ENCODE measurements at regions of chr10 and their contacts with region 1.

Region 1: GRCh38 chr10:74753442-74754211 is 72.8 kb upstream of the KAT6B start:
- DNase-seq: peak; percentile 100
- ATAC-seq: peak; percentile 86
- H3K4me3 ChIP-seq: peak overlapping the region; percentile 30
- H3K27ac ChIP-seq: peak overlapping the region; percentile 82
- H3K4me1 ChIP-seq: peaks cover 25% of the 10 kb centered on the region
- H3K27me3 ChIP-seq: no peaks in the 10 kb centered on the region
- CTCF ChIP-seq: peak; percentile 51

Region 2: GRCh38 chr10:74548676-74549075 is 205.0 kb before region 1 on chr10:
- CTCF ChIA-PET with region 1: no interaction called
- POLR2A ChIA-PET with region 1: no interaction called
- intact Hi-C with region 1: loop called (anchors 1 kb)
- DNase-seq: peak; percentile 100
- ATAC-seq: peak; percentile 97
- H3K4me3 ChIP-seq: peak overlapping the region; percentile 4; the same call in 1 of the 2 replicates
- H3K27ac ChIP-seq: peak overlapping the region; percentile 66
- H3K4me1 ChIP-seq: peaks cover 21% of the 10 kb centered on the region
- H3K27me3 ChIP-seq: no peaks in the 10 kb centered on the region
- CTCF ChIP-seq: no peak

Region 3: GRCh38 chr10:74704629-74705357 is 48.8 kb before region 1 on chr10:
- CTCF ChIA-PET with region 1: no interaction called
- POLR2A ChIA-PET with region 1: no interaction called
- intact Hi-C with region 1: loop called (anchors 1 kb)
- DNase-seq: peak; percentile 95
- ATAC-seq: peak; percentile 95
- H3K4me3 ChIP-seq: no peak overlapping the region
- H3K27ac ChIP-seq: peak overlapping the region; percentile 28
- H3K4me1 ChIP-seq: peaks cover 15% of the 10 kb centered on the region
- H3K27me3 ChIP-seq: no peaks in the 10 kb centered on the region
- CTCF ChIP-seq: no peak

Region 4: DNA sequence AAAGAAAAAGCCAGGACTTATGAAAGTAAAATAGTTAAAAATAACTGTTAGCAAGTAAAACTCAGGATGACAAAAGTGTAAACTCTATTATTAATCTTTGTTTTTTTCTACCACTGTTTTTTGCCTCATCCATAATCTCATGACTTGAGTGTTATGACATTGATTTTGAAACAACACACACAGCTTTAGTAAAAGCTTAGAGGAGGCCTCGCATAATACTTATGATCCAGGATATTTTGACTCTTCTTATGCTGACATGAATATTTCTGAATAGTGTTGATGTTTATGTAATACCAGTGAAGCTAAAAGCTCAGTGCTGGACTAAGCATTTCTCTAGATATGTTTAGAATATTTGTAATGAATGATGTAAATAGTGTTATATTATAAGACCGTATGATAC is 83.2 kb after region 1 on chr10:
- CTCF ChIA-PET with region 1: no interaction called
- POLR2A ChIA-PET with region 1: no interaction called
- intact Hi-C with region 1: no loop called
- DNase-seq: no peak
- ATAC-seq: no peak
- H3K4me3 ChIP-seq: no peak overlapping the region
- H3K27ac ChIP-seq: no peak overlapping the region
- H3K4me1 ChIP-seq: peaks cover 29% of the 10 kb centered on the region
- H3K27me3 ChIP-seq: no peaks in the 10 kb centered on the region
- CTCF ChIP-seq: no peak

Region 5: GRCh38 chr10:74875952-74876351 is 122.3 kb after region 1 on chr10:
- CTCF ChIA-PET with region 1: no interaction called
- POLR2A ChIA-PET with region 1: no interaction called
- intact Hi-C with region 1: loop called (anchors 1 kb)
- DNase-seq: peak; percentile 99
- ATAC-seq: peak; percentile 92
- H3K4me3 ChIP-seq: peak overlapping the region; percentile 1; the same call in 1 of the 2 replicates
- H3K27ac ChIP-seq: peak overlapping the region; percentile 67
- H3K4me1 ChIP-seq: peaks cover 56% of the 10 kb centered on the region
- H3K27me3 ChIP-seq: no peaks in the 10 kb centered on the region
- CTCF ChIP-seq: no peak

Region 6: DNA sequence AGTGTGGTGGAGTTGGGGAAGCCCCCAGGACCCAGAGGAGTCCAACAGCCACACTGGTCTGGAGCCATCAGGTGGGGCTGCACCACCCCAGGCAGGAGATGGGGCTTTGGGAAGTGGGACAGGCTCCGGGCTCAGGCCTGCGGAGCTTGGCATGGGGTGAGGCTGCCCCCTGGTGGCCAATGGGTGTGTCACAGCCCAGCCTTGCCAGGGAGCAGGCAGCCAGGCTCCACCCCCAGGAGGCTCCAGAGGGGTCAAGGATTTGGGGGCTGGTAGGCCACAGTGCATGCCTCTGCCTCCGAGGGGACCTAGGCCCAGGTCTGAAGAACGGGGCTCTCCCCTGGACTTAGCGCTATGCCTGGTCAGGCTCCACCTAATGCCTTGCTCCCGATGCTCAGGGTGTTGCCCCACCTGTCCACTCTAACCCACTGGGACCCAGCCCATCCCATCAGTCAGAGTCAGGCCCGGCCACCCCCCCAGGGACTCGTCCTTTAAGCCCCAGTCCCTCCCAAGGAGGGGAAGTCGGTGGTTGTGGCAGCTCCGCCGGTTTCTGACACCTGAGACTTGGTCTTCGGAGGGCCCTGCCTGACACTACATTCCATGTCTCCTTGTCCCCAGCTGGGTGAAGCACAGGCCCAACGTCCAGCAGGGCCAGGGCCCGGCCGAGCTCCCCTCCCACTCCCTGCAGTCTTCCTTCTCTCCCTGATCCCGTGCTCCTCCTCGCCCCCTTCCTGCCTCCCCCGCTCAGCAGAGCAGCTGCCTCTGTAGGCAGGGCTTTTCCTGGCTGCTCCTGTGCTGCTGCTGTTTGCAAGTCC is 346.5 kb after region 1 on chr10:
- CTCF ChIA-PET with region 1: no interaction called
- POLR2A ChIA-PET with region 1: no interaction called
- intact Hi-C with region 1: loop called (anchors 5 kb)
- DNase-seq: peak; percentile 99
- ATAC-seq: peak; percentile 90
- H3K4me3 ChIP-seq: no peak overlapping the region
- H3K27ac ChIP-seq: no peak overlapping the region
- H3K4me1 ChIP-seq: peaks cover 7% of the 10 kb centered on the region; the same call in 1 of the 2 replicates
- H3K27me3 ChIP-seq: no peaks in the 10 kb centered on the region
- CTCF ChIP-seq: peak; percentile 100